AG04450 (cell line): ENCODE measurements at regions of chrX and their contacts with region 1.

Region 1: DNA sequence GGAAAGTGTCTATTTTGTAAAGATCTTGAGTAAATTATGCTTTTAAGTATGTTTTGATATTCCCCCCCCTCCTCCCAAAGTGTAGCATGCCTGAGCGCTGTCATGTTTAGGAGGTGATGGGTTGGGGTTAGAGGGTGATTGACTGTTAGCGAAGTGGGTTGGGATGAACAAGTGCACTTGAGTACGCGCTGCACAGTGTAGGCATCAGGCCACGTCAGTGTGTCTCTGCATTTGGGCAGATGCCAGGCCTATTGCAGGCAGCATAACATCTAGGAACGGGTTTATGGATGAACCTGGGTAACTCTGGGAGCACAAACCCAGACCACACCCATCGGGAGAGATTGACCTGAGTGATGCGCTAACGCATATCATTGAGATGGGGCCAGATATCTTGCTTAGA is 111.2 kb downstream of the TBL1X start:
- DNase-seq: no peak
- H3K4me3 ChIP-seq: no peak overlapping the region
- H3K27ac ChIP-seq: no peak overlapping the region
- H3K27me3 ChIP-seq: no peaks in the 10 kb centered on the region
- CTCF ChIP-seq: no peak

Region 2: GRCh38 chrX:8849945-8850344 is 726.1 kb before region 1 on chrX:
- CTCF ChIA-PET with region 1: no interaction called
- POLR2A ChIA-PET with region 1: interaction called, 10 read pairs
- DNase-seq: no peak
- H3K4me3 ChIP-seq: no peak overlapping the region
- H3K27ac ChIP-seq: no peak overlapping the region
- H3K27me3 ChIP-seq: no peaks in the 10 kb centered on the region
- CTCF ChIP-seq: no peak